ENCODE measurements at regions of chr1 and their contacts with region 1.

Region 1: GRCh38 chr1:32448773-32449456 is 16.0 kb upstream of the ZBTB8B start:
- DNase-seq: peak; percentile 76
- H3K4me3 Mint-ChIP-seq: peak overlapping the region; percentile 10
- H3K27ac Mint-ChIP-seq: peak overlapping the region; percentile 29
- H3K4me1 Mint-ChIP-seq: peaks cover 27% of the 10 kb centered on the region
- H3K27me3 Mint-ChIP-seq: peaks cover 28% of the 10 kb centered on the region
- CTCF ChIP-seq: peak; percentile 77

Region 2: GRCh38 chr1:32431736-32432400 is 17.0 kb before region 1 on chr1:
- CTCF ChIA-PET with region 1: no interaction called
- intact Hi-C with region 1: no loop called
- DNase-seq: no peak
- H3K4me3 Mint-ChIP-seq: no peak overlapping the region
- H3K27ac Mint-ChIP-seq: no peak overlapping the region
- H3K4me1 Mint-ChIP-seq: peaks cover 12% of the 10 kb centered on the region
- H3K27me3 Mint-ChIP-seq: peaks cover 31% of the 10 kb centered on the region
- CTCF ChIP-seq: no peak

Region 3: GRCh38 chr1:32500387-32501209 is 51.7 kb after region 1 on chr1:
- CTCF ChIA-PET with region 1: no interaction called
- intact Hi-C with region 1: loop called (anchors 2 kb)
- DNase-seq: peak; percentile 81
- H3K4me3 Mint-ChIP-seq: peak overlapping the region; percentile 64
- H3K27ac Mint-ChIP-seq: peak overlapping the region; percentile 63
- H3K4me1 Mint-ChIP-seq: no peaks in the 10 kb centered on the region
- H3K27me3 Mint-ChIP-seq: no peaks in the 10 kb centered on the region
- CTCF ChIP-seq: no peak

Region 4: GRCh38 chr1:32619701-32620485 is 171.0 kb after region 1 on chr1:
- CTCF ChIA-PET with region 1: interaction called, 3 read pairs
- intact Hi-C with region 1: loop called (anchors 2 kb)
- DNase-seq: no peak
- H3K4me3 Mint-ChIP-seq: no peak overlapping the region
- H3K27ac Mint-ChIP-seq: no peak overlapping the region
- H3K4me1 Mint-ChIP-seq: no peaks in the 10 kb centered on the region
- H3K27me3 Mint-ChIP-seq: no peaks in the 10 kb centered on the region
- CTCF ChIP-seq: no peak

Measured in Calu3 (cell line).